ENCODE measurements at regions of chr10 and their contacts with region 1.

Region 1: GRCh38 chr10:89701238-89702120 is at the start of gene KIF20B:
- DNase-seq: peak; percentile 97
- ATAC-seq: peak; percentile 97
- H3K4me3 Mint-ChIP-seq: peak within 1 kb of the TSS; percentile 99
- H3K27ac Mint-ChIP-seq: peak within 1 kb of the TSS; percentile 98
- H3K4me1 Mint-ChIP-seq: peaks cover 41% of the 10 kb centered on the region
- H3K27me3 Mint-ChIP-seq: no peaks in the 10 kb centered on the region
- total RNA-seq, gene KIF20B: 74.6 to 86.2 TPM

Region 2: GRCh38 chr10:88744002-88744401 is 957.5 kb before region 1 on chr10:
- CTCF ChIA-PET with region 1: no interaction called
- POLR2A ChIA-PET with region 1: no interaction called
- intact Hi-C with region 1: no loop called
- DNase-seq: no peak
- ATAC-seq: no peak
- H3K4me3 Mint-ChIP-seq: no peak overlapping the region
- H3K27ac Mint-ChIP-seq: no peak overlapping the region
- H3K4me1 Mint-ChIP-seq: no peaks in the 10 kb centered on the region
- H3K27me3 Mint-ChIP-seq: peaks cover 9% of the 10 kb centered on the region

Region 3: DNA sequence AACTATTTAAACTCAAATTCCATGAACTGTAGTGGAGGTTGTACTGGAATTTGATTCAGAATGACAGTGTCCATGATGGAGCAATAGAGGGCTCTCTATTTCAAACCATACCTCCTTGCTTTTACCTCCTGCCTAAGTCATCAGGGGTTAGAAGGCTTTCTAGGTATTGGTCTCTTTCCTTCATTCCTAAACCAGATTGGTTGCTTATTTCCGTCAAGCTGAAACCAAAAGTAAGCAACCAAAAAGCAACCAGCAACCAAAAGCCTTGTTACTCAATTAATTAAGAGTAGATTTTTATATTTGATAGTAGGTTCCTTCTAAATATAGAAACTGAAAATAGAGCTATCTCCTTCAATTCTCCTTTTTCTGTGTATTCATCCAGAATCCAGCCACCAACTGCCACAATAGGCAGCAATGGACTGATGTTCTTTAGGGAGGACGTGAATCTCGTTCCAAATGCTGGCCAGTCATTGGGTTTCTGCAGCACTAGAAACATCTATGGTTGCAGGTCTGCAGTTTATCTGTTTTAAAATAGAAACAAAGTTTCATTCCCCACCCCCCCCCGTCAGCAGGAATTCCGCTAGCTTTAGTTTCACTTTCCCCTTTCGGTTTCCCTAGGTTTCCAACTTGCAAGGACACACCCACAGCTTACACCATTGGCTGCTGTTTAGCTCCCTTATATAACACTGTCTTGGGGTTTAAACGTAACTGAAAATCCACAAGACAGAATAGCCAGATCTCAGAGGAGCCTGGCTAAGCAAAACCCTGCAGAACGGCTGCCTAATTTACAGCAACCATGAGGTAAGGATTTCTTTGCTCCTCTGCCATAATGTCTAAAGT is 309.3 kb before region 1 on chr10 and contains the start of gene IFIT1:
- CTCF ChIA-PET with region 1: no interaction called
- POLR2A ChIA-PET with region 1: no interaction called
- intact Hi-C with region 1: loop called in 1 of 2 experiments (anchors 1 kb)
- DNase-seq: peak; percentile 53
- ATAC-seq: peak; percentile 87
- H3K4me3 Mint-ChIP-seq: peak within 1 kb of the TSS; percentile 72
- H3K27ac Mint-ChIP-seq: peak within 1 kb of the TSS; percentile 79
- H3K4me1 Mint-ChIP-seq: peaks cover 27% of the 10 kb centered on the region
- H3K27me3 Mint-ChIP-seq: no peaks in the 10 kb centered on the region
- total RNA-seq, gene IFIT1: 5.9 to 6.5 TPM

Region 4: GRCh38 chr10:89643431-89644331 is 57.8 kb before region 1 on chr10:
- CTCF ChIA-PET with region 1: no interaction called
- POLR2A ChIA-PET with region 1: interaction called, 22 read pairs
- intact Hi-C with region 1: loop called (anchors 1 kb)
- DNase-seq: peak; percentile 79
- ATAC-seq: peak; percentile 87
- H3K4me3 Mint-ChIP-seq: no peak overlapping the region
- H3K27ac Mint-ChIP-seq: no peak overlapping the region
- H3K4me1 Mint-ChIP-seq: peaks cover 6% of the 10 kb centered on the region
- H3K27me3 Mint-ChIP-seq: peaks cover 6% of the 10 kb centered on the region

Measured in activated CD4-positive, alpha-beta T cell treated with anti-CD3 and anti-CD28 coated beads for 36 hours (primary cell).